HCT116 (cell line): ENCODE measurements at regions of chr19 and their contacts with region 1.

Region 1: DNA sequence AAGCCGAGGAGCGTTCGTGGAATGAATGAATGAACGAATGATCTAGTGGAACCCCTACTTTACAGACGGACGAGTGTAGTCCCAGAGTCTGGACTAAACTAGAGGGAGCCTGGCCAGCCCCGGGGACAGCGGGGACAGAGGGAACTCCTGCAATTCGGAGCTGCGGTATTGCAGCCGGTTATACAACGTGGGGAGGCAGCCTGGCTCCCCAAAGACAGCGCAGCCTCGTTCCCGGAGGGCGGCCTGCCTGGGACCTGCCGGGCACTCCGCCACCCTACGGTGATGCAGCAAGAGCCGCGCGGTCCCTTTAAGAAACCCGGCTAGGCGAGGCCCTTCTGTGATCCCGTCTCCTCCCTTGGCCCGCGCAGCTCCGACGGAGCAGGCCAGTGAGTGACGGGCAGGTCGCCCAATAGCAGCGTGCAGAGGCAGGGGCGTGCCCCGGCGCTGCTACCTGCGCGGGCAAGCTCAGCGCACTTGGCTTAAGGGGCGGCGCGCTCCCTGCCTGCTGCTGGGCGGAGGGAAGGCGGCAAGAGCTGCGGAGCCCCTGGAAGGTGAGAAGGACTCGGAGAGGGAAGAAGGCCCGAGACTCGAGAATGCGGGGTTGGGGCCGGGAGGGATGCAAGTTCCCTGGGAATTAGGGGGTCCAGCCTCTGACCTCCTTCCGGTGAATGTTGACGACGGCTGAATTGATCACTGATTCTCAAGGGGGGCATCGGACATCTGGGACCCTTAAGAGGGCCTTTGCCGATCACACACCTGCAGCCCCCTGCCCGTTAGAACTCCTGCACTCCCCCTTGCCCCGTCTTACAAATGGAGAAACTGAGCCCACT is at the start of gene ABCA7:
- DNase-seq: peak; percentile 96
- ATAC-seq: peak; percentile 78
- H3K4me3 ChIP-seq: peak within 1 kb of the TSS; percentile 91
- H3K27ac ChIP-seq: peak within 1 kb of the TSS; percentile 78
- H3K4me1 ChIP-seq: peaks cover 31 to 67% of the 10 kb centered on the region in 2 experiments
- H3K27me3 ChIP-seq: no peaks in the 10 kb centered on the region
- CTCF ChIP-seq: no peak
- POLR2A ChIP-seq: no peak
- RAD21 ChIP-seq: no peak
- total RNA-seq, gene ABCA7: 91.4 TPM

Region 2: GRCh38 chr19:1026189-1027019 is 13.5 kb before region 1 on chr19 and contains the start of gene CNN2:
- CTCF ChIA-PET with region 1: interaction called, 9 read pairs
- POLR2A ChIA-PET with region 1: interaction called, 85 read pairs
- RAD21 ChIA-PET with region 1: interaction called, 4 to 7 read pairs
- intact Hi-C with region 1: loop called (anchors 2 kb)
- DNase-seq: no peak
- ATAC-seq: peak; percentile 70
- H3K4me3 ChIP-seq: peak within 1 kb of the TSS; percentile 95 to 99
- H3K27ac ChIP-seq: peak within 1 kb of the TSS; percentile 99
- H3K4me1 ChIP-seq: peaks cover 29 to 46% of the 10 kb centered on the region in 2 experiments
- H3K27me3 ChIP-seq: no peaks in the 10 kb centered on the region
- CTCF ChIP-seq: no peak
- POLR2A ChIP-seq: no peak
- RAD21 ChIP-seq: no peak
- total RNA-seq, gene CNN2: 212 TPM